Gastrocnemius medialis (tissue), 4 donors: ENCODE measurements at regions of chr7 and their contacts with region 1.

Region 1: GRCh38 chr7:30164567-30164966 is 29.8 kb downstream of the MTURN start:
- DNase-seq: no peak
- ATAC-seq: peak; percentile 85 to 94
- H3K4me3 ChIP-seq: no peak overlapping the region
- H3K27ac ChIP-seq: peak overlapping the region in 1 of 4 donors; percentile 30
- H3K4me1 ChIP-seq: peaks cover 15 to 18% of the 10 kb centered on the region in 2 donors
- H3K27me3 ChIP-seq: no peaks in the 10 kb centered on the region
- CTCF ChIP-seq: peak; percentile 31 to 71 (median 65)
- POLR2A ChIP-seq: no peak

Region 2: GRCh38 chr7:29878081-29878688 is 286.4 kb before region 1 on chr7:
- in situ Hi-C with region 1: no loop called
- intact Hi-C with region 1: no loop called
- DNase-seq: no peak
- ATAC-seq: no peak
- H3K4me3 ChIP-seq: no peak overlapping the region
- H3K27ac ChIP-seq: peak overlapping the region in 1 of 4 donors; percentile 3
- H3K4me1 ChIP-seq: peaks cover 1 to 2% of the 10 kb centered on the region in 2 donors
- H3K27me3 ChIP-seq: no peaks in the 10 kb centered on the region
- CTCF ChIP-seq: no peak
- POLR2A ChIP-seq: no peak

Region 3: GRCh38 chr7:30276203-30276900 is 111.8 kb after region 1 on chr7:
- in situ Hi-C with region 1: loop called in 3 of 4 experiments (anchors 10 kb)
- intact Hi-C with region 1: loop called (anchors 2 kb)
- DNase-seq: peak in 1 of 2 donors; percentile 11
- ATAC-seq: peak in 1 of 2 donors; percentile 53
- H3K4me3 ChIP-seq: no peak overlapping the region
- H3K27ac ChIP-seq: no peak overlapping the region
- H3K4me1 ChIP-seq: peaks cover 14 to 18% of the 10 kb centered on the region in 2 donors
- H3K27me3 ChIP-seq: no peaks in the 10 kb centered on the region
- CTCF ChIP-seq: peak; percentile 18 to 62 (median 49)
- POLR2A ChIP-seq: no peak

Region 4: DNA sequence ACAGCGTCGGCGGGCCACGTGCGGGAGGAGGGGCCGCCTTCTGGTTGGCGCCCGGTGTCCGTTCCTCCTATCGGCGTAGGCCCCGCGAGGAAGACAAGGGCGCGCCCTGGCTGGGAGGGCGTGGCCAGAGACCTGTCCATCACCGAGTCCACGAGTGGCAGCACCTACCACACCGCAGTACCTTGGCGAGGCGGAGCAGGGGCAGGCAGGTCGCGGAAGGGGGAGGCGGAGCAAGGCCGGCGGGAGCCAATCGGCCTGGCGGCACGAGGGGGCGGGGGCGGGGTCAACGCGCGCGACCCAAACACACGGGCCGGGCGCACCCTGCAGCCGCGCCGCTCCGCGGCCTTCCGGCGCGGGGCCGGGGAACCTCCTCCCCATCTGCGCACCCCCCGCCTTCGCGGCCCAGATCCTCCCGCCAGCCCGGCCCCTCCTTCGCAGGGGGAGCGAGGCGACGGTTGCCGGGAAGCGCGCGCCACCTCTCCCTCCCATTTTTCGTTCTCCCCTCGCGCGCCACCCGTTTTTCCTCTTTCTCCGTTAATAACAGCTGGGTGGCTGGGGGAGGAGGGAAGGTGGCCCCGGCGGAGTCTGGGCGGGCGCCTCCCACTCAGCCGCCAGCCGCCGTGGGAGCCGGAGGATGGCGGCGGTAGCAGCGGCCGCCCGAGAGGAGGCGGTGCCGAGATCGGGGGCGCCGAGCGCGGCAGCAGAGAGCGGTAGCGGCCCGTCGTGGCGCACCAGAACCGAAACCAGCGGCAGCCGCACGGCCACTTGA is 119.9 kb after region 1 on chr7 and contains the start of gene ZNRF2:
- in situ Hi-C with region 1: loop called in 3 of 4 experiments (anchors 10 kb)
- intact Hi-C with region 1: loop called (anchors 2 kb)
- DNase-seq: peak; percentile 100
- ATAC-seq: peak; percentile 76 to 79
- H3K4me3 ChIP-seq: peak within 1 kb of the TSS; percentile 77 to 98 (median 81)
- H3K27ac ChIP-seq: peak within 1 kb of the TSS; percentile 91 to 99 (median 96)
- H3K4me1 ChIP-seq: peaks cover 32 to 39% of the 10 kb centered on the region in 2 donors
- H3K27me3 ChIP-seq: no peaks in the 10 kb centered on the region
- CTCF ChIP-seq: peak; percentile 39 to 53 (median 50)
- POLR2A ChIP-seq: peak; percentile 89 to 93
- total RNA-seq, gene ZNRF2: 9.6 to 19.3 (median 17.4) TPM

Region 5: DNA sequence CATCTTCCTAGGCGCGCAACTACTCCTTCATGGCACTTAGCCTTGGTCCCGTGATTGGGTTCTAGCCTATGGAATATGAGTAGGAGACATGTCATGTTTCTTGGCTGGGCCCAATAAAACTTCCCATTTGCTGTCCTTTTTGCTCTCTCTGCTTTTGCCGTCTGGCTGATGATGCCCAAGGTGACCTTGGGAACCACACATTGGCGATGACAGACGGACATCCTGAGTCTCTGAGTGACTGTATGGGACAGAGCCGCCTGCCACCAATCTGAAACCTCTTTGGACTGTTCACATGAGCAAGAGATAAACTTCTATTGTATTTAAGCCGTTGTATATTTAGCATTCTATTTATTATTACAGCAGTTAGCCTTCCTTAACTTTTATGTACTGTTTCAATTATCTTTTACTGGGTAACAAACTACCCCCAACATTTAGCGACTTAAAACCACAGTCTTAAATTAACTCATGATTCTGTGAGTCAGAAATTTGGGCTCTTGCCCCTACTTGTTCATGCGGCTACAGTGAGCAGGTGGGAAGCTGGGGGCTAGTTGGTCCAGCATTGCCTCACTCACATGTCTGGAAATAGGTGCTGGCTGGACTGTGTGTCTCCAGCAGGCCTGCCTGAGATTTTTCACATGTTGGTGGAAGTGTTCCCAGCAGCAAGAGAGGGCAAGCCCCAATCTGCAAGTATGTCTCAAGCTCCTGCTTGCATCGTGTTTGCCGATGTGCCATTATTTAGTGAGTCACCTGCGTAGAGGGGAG is 242.3 kb after region 1 on chr7:
- in situ Hi-C with region 1: loop called (anchors 5 to 10 kb)
- intact Hi-C with region 1: loop called (anchors 2 kb)
- DNase-seq: peak; percentile 84 to 94
- ATAC-seq: peak; percentile 96
- H3K4me3 ChIP-seq: peak overlapping the region in 2 of 4 donors; percentile 8 to 9
- H3K27ac ChIP-seq: peak overlapping the region; percentile 83 to 87 (median 84)
- H3K4me1 ChIP-seq: peaks cover 0 to 4% of the 10 kb centered on the region in 2 donors
- H3K27me3 ChIP-seq: no peaks in the 10 kb centered on the region
- CTCF ChIP-seq: no peak
- POLR2A ChIP-seq: no peak

Region 6: GRCh38 chr7:30412810-30413504 is 248.4 kb after region 1 on chr7:
- in situ Hi-C with region 1: loop called (anchors 5 to 10 kb)
- intact Hi-C with region 1: loop called (anchors 2 kb)
- DNase-seq: peak in 1 of 2 donors; percentile 47
- ATAC-seq: peak; percentile 94 to 97
- H3K4me3 ChIP-seq: no peak overlapping the region
- H3K27ac ChIP-seq: no peak overlapping the region
- H3K4me1 ChIP-seq: peaks cover 0 to 3% of the 10 kb centered on the region in 2 donors
- H3K27me3 ChIP-seq: no peaks in the 10 kb centered on the region
- CTCF ChIP-seq: peak; percentile 48 to 74 (median 62)
- POLR2A ChIP-seq: no peak

Region 7: DNA sequence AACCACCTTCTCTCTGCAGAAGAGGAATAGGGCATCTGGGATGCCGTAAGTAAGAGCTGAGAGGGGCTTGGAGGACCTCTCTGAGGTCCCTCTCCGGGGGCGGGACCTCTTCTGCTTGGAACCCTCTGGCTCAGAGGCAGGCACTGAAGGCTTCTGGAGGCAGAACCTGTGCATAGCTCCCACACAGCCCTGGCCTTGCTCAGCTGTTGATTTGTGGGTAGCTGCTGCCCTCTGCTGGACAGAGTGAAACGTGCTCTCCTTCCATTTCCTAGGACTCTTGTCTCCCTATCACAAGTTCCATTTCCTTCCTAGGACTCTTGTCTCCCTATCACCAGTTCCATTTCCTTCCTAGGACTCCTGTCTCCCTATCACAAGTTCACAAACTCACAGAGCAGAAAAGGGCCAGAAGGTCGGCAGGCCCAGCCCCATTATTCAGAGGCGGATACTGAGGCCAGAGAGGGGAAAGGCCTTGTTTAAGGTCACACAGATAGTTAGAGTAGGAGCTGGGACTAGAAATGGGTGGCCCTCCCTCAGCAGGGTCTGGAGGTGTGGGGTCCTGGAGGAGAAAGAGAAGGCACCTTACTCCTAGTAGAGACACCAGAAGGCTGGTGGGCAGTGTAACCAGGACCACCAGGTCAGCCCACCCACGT is 399.8 kb after region 1 on chr7:
- in situ Hi-C with region 1: loop called in 1 of 4 experiments (anchors 25 kb)
- intact Hi-C with region 1: no loop called
- DNase-seq: peak; percentile 53 to 66
- ATAC-seq: peak; percentile 82 to 96
- H3K4me3 ChIP-seq: no peak overlapping the region
- H3K27ac ChIP-seq: no peak overlapping the region
- H3K4me1 ChIP-seq: no peaks in the 10 kb centered on the region
- H3K27me3 ChIP-seq: no peaks in the 10 kb centered on the region
- CTCF ChIP-seq: peak; percentile 74 to 89 (median 80)
- POLR2A ChIP-seq: no peak